ENCODE measurements at regions of chr6 and their contacts with region 1.

Region 1: DNA sequence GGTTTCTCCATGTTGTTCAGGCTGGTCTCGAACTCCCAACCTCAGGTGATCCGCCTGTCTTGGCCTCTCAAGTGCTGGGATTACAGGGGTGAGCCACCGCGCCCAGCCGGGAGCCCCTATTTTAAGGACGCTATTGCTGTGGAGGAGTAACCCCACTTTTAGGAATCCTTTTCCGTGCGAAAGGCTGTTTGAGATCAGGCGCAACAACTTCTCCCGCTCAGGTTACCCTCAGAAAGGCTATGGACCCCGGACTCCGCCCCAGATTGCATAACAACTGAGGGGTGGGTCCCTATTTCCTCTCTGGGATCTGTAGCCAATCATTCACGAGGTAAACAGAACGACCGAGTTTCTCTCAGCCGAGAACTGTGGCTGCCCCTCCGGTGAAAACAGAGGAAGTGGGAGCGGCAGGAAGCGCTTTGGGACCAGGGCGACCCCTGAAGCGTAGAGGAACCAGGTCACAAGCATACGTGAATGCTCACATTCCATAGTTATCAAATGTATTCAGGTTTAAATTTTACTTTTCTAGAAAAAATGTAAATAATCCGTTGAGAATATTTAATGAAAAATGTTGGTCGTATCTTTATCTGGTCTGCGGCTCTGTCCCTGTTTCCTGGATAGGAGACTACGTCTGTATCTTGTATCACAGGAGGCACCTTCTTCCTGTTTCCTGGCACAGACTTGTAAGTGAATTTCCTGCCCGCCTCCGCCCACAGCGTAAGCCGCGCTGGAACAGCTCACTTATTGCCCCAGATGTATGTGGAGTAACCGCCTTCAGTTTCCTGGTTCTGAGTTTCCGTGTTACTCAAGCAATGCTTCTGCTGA is 26.8 kb downstream of the HLA-E start:
- DNase-seq: peak; percentile 91 to 96 (median 94)
- ATAC-seq: peak; percentile 97
- H3K4me3 ChIP-seq: peak overlapping the region; percentile 44
- H3K27ac ChIP-seq: peak overlapping the region; percentile 93
- H3K4me1 ChIP-seq: peaks cover 2 to 10% of the 10 kb centered on the region in 2 experiments; a peak in 3 of 5 replicates
- H3K27me3 ChIP-seq: no peaks in the 10 kb centered on the region
- CTCF ChIP-seq: no peak
- EP300 ChIP-seq: peak; percentile 78; the same call in 1 of the 2 replicates
- POLR2A ChIP-seq: peak; percentile 95
- RAD21 ChIP-seq: peak in 1 of 2 experiments; percentile 3; a peak in 1 of 4 replicates

Region 2: DNA sequence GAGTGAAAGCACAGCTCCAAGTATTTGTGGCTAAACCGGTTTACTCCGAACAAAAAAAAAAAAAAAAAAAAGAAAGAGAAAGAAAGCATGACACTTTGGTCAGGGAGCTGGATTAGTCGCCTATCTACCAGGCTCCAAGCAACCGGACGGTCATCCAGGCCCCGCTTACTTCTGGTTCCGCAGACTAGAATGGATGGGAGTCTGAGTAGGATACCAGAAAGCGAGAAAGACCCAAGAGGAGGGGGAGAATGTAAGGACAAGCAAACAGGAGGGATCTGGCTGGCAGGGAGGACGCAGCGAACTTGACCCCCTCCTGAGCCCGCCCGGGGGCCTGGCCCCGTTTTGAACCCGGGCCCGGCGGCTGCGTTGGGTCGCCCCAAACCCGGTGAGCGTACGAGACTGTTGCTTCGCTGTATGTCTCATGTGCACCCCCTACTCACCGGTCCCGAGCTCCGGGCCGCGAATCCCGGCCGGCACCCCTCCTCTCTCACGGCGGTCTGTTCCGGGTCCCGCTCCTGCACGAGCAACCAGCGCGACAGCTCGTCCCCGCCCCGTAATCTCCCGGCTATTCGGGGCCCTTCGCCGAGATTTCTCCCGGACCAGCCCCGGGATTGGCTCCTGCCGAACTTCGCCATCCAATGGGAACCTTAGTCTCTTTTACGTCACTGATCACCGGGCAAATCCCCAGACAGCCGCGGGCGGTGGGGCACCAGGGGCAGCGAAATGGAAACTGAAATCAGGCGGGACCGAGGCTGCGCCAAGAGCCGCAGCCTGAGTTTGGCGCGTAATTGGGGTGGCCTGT is 303.1 kb before region 1 on chr6 and contains the start of gene TRIM26:
- CTCF ChIA-PET with region 1: no interaction called
- POLR2A ChIA-PET with region 1: no interaction called
- in situ Hi-C with region 1: no loop called
- intact Hi-C with region 1: no loop called
- DNase-seq: peak; percentile 82 to 94 (median 88)
- ATAC-seq: peak; percentile 98
- H3K4me3 ChIP-seq: peak within 1 kb of the TSS; percentile 40
- H3K27ac ChIP-seq: no peak within 1 kb of the TSS
- H3K4me1 ChIP-seq: peaks cover 0 to 17% of the 10 kb centered on the region in 2 experiments; a peak in 2 of 5 replicates
- H3K27me3 ChIP-seq: peaks cover 0 to 10% of the 10 kb centered on the region in 2 experiments; a peak in 2 of 5 replicates
- CTCF ChIP-seq: no peak
- EP300 ChIP-seq: no peak
- POLR2A ChIP-seq: peak; percentile 27; the same call in 1 of the 2 replicates
- RAD21 ChIP-seq: no peak
- polyA plus RNA-seq, gene TRIM26: 0.80 to 1.1 TPM

Region 3: GRCh38 chr6:30533460-30534294 is 17.5 kb after region 1 on chr6:
- CTCF ChIA-PET with region 1: no interaction called
- POLR2A ChIA-PET with region 1: interaction called, 7 read pairs
- in situ Hi-C with region 1: no loop called
- intact Hi-C with region 1: loop called (anchors 1 kb)
- DNase-seq: no peak
- ATAC-seq: no peak
- H3K4me3 ChIP-seq: no peak overlapping the region
- H3K27ac ChIP-seq: no peak overlapping the region
- H3K4me1 ChIP-seq: peaks cover 7 to 14% of the 10 kb centered on the region in 2 experiments; a peak in 4 of 5 replicates
- H3K27me3 ChIP-seq: no peaks in the 10 kb centered on the region
- CTCF ChIP-seq: no peak; a peak in 1 of 6 replicates
- EP300 ChIP-seq: no peak
- POLR2A ChIP-seq: no peak
- RAD21 ChIP-seq: no peak

Measured in K562 (cell line).